PC-9 (cell line): ENCODE measurements at regions of chr11 and their contacts with region 1.

Region 1: DNA sequence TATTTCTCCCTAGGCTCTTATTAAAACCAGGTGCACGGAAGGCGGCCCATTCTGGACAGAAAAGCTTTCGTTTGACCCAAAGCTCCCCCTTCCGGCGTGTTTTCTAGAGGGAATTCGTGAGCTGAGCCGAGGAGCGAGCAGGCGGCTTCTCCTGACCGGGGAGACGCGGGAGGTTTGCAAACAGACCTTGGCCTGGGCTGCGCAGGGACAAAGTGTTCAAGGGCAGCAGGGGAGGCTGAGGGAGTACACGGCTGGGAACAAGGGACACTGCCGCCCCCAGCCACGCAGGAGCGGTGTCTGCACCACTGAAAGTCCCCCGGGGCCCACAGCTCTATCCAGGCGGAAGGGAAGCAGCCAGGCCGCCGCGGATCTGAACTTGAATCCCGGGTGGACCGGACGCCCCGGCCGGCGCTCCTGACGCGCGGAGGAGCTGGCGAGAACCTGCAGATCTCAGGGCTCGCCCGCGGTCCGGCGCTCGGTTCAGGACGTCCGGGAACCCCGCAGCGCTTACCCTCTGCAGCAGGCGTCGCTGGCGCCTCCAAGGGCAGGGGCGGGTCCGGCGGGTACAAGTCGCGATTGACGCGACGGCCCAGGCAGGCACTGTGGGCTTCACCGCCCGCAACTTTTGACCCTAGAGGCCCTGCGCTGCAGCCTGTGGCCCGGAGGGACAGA is 101.9 kb downstream of the WT1 start:
- DNase-seq: no peak
- H3K4me3 ChIP-seq: no peak overlapping the region
- H3K27ac ChIP-seq: no peak overlapping the region
- H3K4me1 ChIP-seq: no peaks in the 10 kb centered on the region
- H3K27me3 ChIP-seq: no peaks in the 10 kb centered on the region
- CTCF ChIP-seq: no peak

Region 2: GRCh38 chr11:32549611-32550187 is 216.2 kb after region 1 on chr11:
- CTCF ChIA-PET with region 1: interaction called, 11 read pairs
- POLR2A ChIA-PET with region 1: no interaction called
- intact Hi-C with region 1: no loop called
- DNase-seq: no peak
- H3K4me3 ChIP-seq: no peak overlapping the region
- H3K27ac ChIP-seq: no peak overlapping the region
- H3K4me1 ChIP-seq: no peaks in the 10 kb centered on the region
- H3K27me3 ChIP-seq: no peaks in the 10 kb centered on the region
- CTCF ChIP-seq: no peak

Region 3: GRCh38 chr11:32960553-32961164 is 627.2 kb after region 1 on chr11:
- CTCF ChIA-PET with region 1: no interaction called
- POLR2A ChIA-PET with region 1: interaction called, 15 read pairs
- intact Hi-C with region 1: no loop called
- DNase-seq: peak in 1 of 2 experiments; percentile 59
- H3K4me3 ChIP-seq: no peak overlapping the region
- H3K27ac ChIP-seq: no peak overlapping the region
- H3K4me1 ChIP-seq: no peaks in the 10 kb centered on the region
- H3K27me3 ChIP-seq: no peaks in the 10 kb centered on the region
- CTCF ChIP-seq: peak; percentile 90